Sigmoid colon (tissue), 7 donors: ENCODE measurements at regions of chr5 and their contacts with region 1.

Region 1: GRCh38 chr5:142548739-142549275 is 137.1 kb downstream of the FGF1 start:
- DNase-seq: peak; percentile 70
- H3K4me3 ChIP-seq: no peak overlapping the region
- H3K27ac ChIP-seq: no peak overlapping the region
- H3K4me1 ChIP-seq: peaks cover 0 to 20% (median 5%) of the 10 kb centered on the region in 4 donors
- H3K27me3 ChIP-seq: no peaks in the 10 kb centered on the region
- CTCF ChIP-seq: peak; percentile 40 to 60 (median 44)
- EP300 ChIP-seq: no peak
- POLR2A ChIP-seq: no peak

Region 2: DNA sequence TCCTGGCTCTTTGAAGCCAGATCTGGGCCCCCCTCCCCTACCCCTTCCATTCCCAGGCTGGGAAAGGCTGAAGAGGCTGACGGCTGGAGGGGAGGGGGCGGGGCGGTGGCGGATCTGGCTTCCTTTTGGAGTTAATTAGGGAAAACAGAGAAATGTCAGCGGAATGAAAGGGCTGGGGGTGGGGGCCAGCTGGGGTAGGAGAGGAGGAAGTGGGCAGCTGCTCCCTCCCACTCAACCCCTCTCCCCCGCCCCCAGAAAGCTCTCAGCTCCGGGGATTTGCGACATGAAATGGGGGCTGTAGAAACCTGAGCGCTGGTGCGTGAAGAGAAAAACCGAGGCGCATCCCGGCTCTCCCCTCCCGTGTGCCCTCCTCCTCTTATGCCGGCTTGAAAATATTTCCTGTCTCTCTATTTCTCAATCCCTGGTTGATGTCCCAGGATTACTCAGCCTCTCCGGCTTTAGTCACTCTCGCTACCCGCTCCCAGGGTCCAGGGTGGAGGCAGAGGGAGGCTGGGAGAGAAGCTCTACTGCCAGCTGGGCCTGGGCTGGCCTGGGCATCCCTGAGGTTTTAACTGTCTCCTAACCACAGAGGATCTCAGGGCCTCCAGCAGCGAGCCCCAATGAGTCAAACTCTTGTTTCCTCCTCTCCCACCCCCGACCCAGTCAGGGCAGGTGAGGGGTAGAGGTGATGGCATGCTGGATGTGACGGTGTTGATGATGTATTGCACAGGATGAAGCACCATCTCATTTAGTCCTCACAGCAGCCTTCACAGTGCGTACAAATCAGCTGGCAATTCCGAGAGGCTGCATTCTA is 1039.8 kb before region 1 on chr5:
- intact Hi-C with region 1: no loop called
- DNase-seq: peak; percentile 90
- H3K4me3 ChIP-seq: peak overlapping the region; percentile 12 to 44 (median 34)
- H3K27ac ChIP-seq: peak overlapping the region; percentile 83 to 87 (median 86)
- H3K4me1 ChIP-seq: peaks cover 0 to 55% (median 45%) of the 10 kb centered on the region in 4 donors
- H3K27me3 ChIP-seq: no peaks in the 10 kb centered on the region
- CTCF ChIP-seq: no peak
- EP300 ChIP-seq: no peak
- POLR2A ChIP-seq: peak; percentile 19 to 24

Region 3: DNA sequence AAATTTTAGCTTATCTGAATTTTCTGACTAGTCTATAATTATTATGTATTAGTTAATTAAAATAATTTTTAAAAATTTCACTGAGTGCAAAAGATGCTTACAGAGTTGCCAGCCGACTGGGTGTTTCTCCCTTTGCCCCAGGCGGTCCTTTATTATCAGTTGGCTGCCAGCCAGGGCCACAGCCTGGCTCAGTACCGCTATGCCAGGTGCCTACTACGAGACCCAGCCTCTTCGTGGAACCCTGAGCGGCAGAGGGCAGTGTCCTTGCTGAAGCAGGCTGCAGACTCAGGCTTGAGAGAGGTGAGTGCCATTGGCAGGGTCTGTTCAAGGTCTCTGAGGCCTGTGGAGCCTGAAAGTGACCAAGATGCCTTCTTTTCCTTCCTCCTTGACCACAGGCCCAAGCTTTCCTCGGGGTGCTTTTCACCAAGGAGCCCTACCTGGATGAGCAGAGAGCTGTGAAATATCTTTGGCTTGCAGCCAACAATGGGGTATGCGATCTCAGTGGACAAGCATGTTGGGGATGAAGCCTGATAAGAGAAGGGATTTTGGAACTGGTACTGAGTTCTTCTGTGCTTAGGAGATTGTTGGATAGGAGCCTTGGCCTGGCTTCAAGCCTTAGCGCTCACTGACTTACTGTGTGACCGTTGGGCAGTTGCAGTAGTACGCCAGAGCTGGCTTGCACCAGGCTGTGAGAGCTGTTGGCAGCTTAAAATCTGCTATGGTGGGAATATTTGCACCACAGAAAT is 614.5 kb before region 1 on chr5:
- intact Hi-C with region 1: no loop called
- DNase-seq: no peak
- H3K4me3 ChIP-seq: no peak overlapping the region
- H3K27ac ChIP-seq: no peak overlapping the region
- H3K4me1 ChIP-seq: peaks cover 0 to 3% (median 0%) of the 10 kb centered on the region in 4 donors
- H3K27me3 ChIP-seq: no peaks in the 10 kb centered on the region
- CTCF ChIP-seq: no peak
- EP300 ChIP-seq: no peak
- POLR2A ChIP-seq: no peak

Region 4: DNA sequence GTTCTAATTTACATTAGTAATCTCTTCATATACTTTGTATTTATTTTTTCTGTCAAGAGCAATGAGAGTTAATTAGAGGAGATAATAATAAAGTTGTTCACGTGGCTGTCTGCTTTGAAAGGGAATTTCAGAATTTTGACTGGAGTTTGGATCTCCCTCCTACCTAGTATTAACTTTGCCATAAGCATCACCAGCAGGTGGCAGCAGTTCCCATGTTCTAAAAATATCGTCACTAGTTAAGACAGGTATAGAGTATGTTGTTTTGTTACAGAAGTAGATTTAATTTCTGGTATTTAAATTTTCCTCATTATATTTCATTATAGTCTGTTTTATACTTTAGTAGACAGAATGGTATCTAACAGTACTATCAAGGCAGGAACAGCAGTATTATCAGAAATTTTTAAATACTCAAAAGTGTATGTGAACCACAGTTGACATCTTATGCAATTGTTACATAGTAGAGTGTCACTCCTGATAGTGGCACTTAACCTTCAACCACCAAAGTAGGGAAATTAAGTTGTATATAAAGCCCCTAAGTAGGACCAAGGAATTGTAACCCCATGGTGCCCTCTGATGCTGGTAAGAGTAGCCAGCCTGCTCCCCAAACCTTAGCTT is 556.4 kb before region 1 on chr5:
- intact Hi-C with region 1: loop called (anchors 10 kb)
- DNase-seq: peak; percentile 83
- H3K4me3 ChIP-seq: no peak overlapping the region
- H3K27ac ChIP-seq: peak overlapping the region in 1 of 4 donors; percentile 21
- H3K4me1 ChIP-seq: peaks cover 0 to 5% (median 0%) of the 10 kb centered on the region in 4 donors
- H3K27me3 ChIP-seq: no peaks in the 10 kb centered on the region
- CTCF ChIP-seq: peak; percentile 34 to 80 (median 59)
- EP300 ChIP-seq: no peak
- POLR2A ChIP-seq: no peak

Region 5: DNA sequence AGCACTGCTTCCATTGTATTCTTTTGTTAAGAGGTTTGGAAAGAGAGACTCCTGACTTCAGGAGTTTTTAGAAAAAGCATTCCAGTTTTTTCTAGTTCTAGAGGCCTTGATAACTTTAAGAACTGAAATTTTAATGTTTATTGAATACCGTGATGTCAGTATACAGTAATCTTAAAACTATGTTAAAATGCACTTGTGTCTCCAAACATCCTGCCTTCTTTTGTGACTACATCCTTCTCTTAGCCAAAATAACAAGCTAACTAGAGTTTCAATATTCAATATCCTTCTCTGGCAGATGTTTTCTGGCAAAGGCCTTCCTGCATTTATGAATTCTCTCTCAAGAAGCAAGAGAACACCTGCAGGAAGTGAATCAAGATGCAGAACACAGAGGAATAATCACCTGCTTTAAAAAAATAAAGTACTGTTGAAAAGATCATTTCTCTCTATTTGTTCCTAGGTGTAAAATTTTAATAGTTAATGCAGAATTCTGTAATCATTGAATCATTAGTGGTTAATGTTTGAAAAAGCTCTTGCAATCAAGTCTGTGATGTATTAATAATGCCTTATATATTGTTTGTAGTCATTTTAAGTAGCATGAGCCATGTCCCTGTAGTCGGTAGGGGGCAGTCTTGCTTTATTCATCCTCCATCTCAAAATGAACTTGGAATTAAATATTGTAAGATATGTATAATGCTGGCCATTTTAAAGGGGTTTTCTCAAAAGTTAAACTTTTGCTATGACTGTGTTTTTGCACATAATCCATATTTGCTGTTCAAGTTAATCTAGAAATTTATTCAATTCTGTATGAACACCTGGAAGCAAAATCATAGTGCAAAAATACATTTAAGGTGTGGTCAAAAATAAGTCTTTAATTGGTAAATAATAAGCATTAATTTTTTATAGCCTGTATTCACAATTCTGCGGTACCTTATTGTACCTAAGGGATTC is 397.1 kb before region 1 on chr5:
- intact Hi-C with region 1: loop called (anchors 2 kb)
- DNase-seq: no peak
- H3K4me3 ChIP-seq: no peak overlapping the region
- H3K27ac ChIP-seq: no peak overlapping the region
- H3K4me1 ChIP-seq: peaks cover 0 to 4% (median 0%) of the 10 kb centered on the region in 4 donors
- H3K27me3 ChIP-seq: no peaks in the 10 kb centered on the region
- CTCF ChIP-seq: peak; percentile 46 to 78 (median 68)
- EP300 ChIP-seq: no peak
- POLR2A ChIP-seq: no peak

Region 6: GRCh38 chr5:142324871-142325724 is 223.7 kb before region 1 on chr5 and contains the start of gene SPRY4:
- intact Hi-C with region 1: loop called (anchors 10 kb)
- DNase-seq: peak; percentile 97
- H3K4me3 ChIP-seq: peak within 1 kb of the TSS; percentile 47 to 65 (median 54)
- H3K27ac ChIP-seq: peak within 1 kb of the TSS; percentile 69 to 96 (median 82)
- H3K4me1 ChIP-seq: peaks cover 0 to 29% (median 25%) of the 10 kb centered on the region in 4 donors
- H3K27me3 ChIP-seq: peaks cover 10 to 40% (median 22%) of the 10 kb centered on the region in 3 donors
- CTCF ChIP-seq: no peak
- EP300 ChIP-seq: no peak
- POLR2A ChIP-seq: peak in 1 of 2 donors; percentile 67
- total RNA-seq, gene SPRY4: 8.6 to 15.7 (median 12.4) TPM

Region 7: DNA sequence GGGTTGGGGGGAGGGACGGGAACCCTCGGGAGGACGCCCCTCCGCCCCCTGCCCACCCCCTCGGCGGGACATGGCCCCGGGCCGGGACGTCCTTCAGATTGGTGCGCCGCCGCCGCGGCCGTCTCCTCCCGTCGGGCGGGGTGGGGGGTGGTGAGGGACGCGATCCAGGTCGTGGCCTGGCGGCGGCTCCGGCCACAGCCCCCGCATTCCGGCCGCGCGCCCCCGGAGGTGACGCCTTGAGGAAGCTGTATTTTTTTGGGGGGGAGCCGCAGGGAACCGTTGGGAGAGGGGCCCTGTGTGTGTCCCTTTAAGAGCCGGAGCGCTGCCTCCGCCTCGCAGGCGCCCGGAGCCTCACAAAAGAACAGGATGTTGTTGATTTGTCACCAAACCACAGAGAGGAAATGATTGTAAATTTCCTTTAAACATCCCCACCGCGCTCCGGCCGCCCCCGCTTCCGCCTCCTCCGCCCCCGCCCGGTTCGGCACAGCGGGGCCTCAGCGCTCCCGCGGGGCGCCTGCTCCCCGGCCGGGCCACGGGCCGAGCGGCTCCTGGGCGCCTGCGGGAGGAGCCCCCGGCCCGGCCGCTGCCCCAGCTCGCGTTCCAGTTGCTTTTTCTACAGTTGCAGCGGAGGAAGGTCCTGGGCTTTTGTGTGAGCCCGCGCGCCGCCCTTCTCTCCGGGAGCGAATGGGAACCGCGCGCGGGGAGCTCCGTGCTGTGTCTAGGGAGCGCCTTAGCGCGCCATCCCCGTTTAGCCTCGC is 191.9 kb before region 1 on chr5:
- intact Hi-C with region 1: loop called (anchors 10 kb)
- DNase-seq: peak; percentile 93
- H3K4me3 ChIP-seq: peak overlapping the region; percentile 46 to 68 (median 58)
- H3K27ac ChIP-seq: peak overlapping the region; percentile 72 to 97 (median 82)
- H3K4me1 ChIP-seq: peaks cover 0 to 20% (median 11%) of the 10 kb centered on the region in 4 donors
- H3K27me3 ChIP-seq: no peaks in the 10 kb centered on the region
- CTCF ChIP-seq: no peak
- EP300 ChIP-seq: no peak
- POLR2A ChIP-seq: no peak